Activated CD8-positive, alpha-beta T cell treated with anti-CD3 and anti-CD28 coated beads for 36 hours (primary cell): ENCODE measurements at regions of chr14 and their contacts with region 1.

Region 1: DNA sequence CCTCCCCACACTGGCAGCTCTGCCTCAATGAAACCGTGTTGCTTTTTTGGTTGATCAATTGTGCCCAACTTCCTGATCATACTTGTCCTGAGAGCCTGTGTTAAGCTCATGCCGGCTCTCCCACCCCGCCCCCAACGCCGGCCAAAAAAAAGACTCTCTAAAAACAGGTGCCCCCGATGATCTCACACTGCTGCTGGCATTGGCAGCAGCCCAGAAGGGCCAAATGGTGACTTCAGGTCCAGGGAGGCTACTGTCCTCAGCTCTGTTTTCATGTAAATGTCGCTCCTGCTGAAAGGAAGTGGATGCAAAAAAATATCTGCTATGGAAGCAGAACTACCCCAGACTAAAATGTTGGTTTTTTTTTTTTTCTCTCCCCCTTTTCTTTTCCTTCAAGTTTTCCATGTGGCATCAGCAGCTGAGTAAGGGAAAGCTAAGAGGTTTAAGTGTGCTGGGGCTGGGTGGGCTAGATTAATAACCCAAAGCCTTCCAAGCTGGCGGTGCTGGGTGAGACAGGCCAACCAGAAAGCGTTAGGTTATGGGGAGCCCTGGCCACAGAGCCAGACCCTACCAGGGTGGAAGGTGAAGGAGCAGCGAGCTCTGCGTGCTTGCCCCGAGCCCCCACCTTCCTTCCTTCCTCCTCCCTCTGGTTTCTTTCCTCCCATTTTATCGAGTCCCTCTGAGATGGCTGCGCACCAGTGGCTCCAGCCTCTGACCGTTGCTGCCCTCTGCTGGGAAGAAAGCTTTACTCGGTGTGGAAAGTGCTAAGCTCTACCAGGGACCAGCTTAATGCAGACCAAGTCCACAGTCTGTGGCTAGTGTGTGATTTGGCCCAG is 396.1 kb downstream of the NRXN3 start:
- DNase-seq: peak; percentile 80
- ATAC-seq: peak; percentile 87
- H3K4me3 Mint-ChIP-seq: no peak overlapping the region
- H3K27ac Mint-ChIP-seq: no peak overlapping the region
- H3K4me1 Mint-ChIP-seq: peaks cover 3% of the 10 kb centered on the region
- H3K27me3 Mint-ChIP-seq: peaks cover 2% of the 10 kb centered on the region
- CTCF ChIP-seq: peak; percentile 58

Region 2: GRCh38 chr14:78022059-78022458 is 544.2 kb before region 1 on chr14:
- CTCF ChIA-PET with region 1: interaction called, 38 read pairs
- POLR2A ChIA-PET with region 1: no interaction called
- intact Hi-C with region 1: loop called (anchors 10 kb)
- DNase-seq: peak; percentile 83
- ATAC-seq: peak; percentile 74
- H3K4me3 Mint-ChIP-seq: no peak overlapping the region
- H3K27ac Mint-ChIP-seq: no peak overlapping the region
- H3K4me1 Mint-ChIP-seq: no peaks in the 10 kb centered on the region
- H3K27me3 Mint-ChIP-seq: peaks cover 3% of the 10 kb centered on the region
- CTCF ChIP-seq: peak; percentile 58

Region 3: GRCh38 chr14:78448164-78449094 is 117.8 kb before region 1 on chr14:
- CTCF ChIA-PET with region 1: interaction called, 9 read pairs
- POLR2A ChIA-PET with region 1: no interaction called
- intact Hi-C with region 1: loop called (anchors 5 kb)
- DNase-seq: peak; percentile 65
- ATAC-seq: no peak
- H3K4me3 Mint-ChIP-seq: no peak overlapping the region
- H3K27ac Mint-ChIP-seq: no peak overlapping the region
- H3K4me1 Mint-ChIP-seq: no peaks in the 10 kb centered on the region
- H3K27me3 Mint-ChIP-seq: no peaks in the 10 kb centered on the region
- CTCF ChIP-seq: peak; percentile 67

Region 4: DNA sequence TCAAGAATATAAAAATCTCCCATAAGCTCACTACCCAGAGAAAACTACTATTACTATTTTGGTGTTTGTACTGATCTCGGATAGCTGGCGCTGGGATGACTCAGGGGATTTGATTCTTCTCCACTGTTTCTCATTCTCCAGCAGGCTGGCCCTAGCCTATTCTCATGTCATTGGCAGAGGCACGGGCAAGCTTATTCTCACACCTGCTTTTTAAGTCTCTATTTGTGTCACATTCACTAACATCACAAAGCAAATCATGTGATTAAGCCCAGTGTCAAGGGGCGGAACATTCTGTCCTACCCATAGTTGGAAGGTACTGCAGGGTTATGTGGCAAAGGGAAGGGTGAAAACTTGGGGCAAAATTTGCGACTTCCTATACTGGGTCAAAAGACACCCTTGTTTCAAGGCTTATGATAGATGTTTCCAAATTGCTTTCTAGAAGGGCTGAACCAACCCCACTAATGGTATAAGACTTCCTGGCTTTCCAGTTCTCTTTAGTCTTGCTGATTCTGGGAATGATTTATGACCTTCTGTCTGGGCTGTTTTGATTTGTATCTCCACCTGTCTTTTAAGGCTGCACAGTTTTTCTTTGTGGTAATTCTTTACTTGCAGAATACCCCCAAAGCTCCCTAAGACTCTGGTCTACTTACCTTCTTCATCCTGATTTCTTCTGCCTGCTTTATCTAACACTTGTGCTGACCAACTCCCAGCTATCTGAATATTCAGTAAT is 10.4 kb after region 1 on chr14:
- CTCF ChIA-PET with region 1: interaction called, 21 read pairs
- POLR2A ChIA-PET with region 1: no interaction called
- intact Hi-C with region 1: no loop called
- DNase-seq: no peak
- ATAC-seq: no peak
- H3K4me3 Mint-ChIP-seq: no peak overlapping the region
- H3K27ac Mint-ChIP-seq: no peak overlapping the region
- H3K4me1 Mint-ChIP-seq: no peaks in the 10 kb centered on the region
- H3K27me3 Mint-ChIP-seq: peaks cover 1% of the 10 kb centered on the region
- CTCF ChIP-seq: no peak